BJ (cell line): ENCODE measurements at regions of chr7 and their contacts with region 1.

Region 1: DNA sequence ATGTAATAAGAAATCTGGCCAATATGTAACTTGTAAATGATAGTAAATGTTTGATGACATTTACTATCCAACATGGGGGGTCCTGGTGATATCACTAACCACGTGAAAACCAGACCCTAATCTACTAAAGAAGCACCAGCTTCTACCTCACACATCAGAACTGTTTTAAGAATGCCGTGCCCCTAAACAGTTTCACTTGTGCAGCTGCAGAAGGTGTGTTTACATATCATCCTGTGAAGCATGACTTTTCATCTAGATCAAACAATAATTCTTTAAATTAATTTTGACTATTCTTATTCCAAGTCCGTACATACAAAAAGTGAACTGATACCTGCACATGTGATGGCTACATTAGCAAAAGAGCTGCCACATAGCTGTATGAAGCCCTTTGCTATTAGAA is 61.0 kb downstream of the STEAP1B start:
- DNase-seq: no peak
- H3K4me3 ChIP-seq: no peak overlapping the region
- H3K27me3 ChIP-seq: no peaks in the 10 kb centered on the region; the same call in 1 of the 2 replicates
- CTCF ChIP-seq: no peak

Region 2: GRCh38 chr7:22452142-22452959 is 13.4 kb after region 1 on chr7:
- CTCF ChIA-PET with region 1: interaction called, 15 read pairs
- POLR2A ChIA-PET with region 1: no interaction called
- DNase-seq: no peak
- H3K4me3 ChIP-seq: peak overlapping the region; percentile 6; the same call in 1 of the 2 replicates
- H3K27me3 ChIP-seq: no peaks in the 10 kb centered on the region; the same call in 1 of the 2 replicates
- CTCF ChIP-seq: peak; percentile 72